ENCODE measurements at regions of chr13 and their contacts with region 1.

Region 1: DNA sequence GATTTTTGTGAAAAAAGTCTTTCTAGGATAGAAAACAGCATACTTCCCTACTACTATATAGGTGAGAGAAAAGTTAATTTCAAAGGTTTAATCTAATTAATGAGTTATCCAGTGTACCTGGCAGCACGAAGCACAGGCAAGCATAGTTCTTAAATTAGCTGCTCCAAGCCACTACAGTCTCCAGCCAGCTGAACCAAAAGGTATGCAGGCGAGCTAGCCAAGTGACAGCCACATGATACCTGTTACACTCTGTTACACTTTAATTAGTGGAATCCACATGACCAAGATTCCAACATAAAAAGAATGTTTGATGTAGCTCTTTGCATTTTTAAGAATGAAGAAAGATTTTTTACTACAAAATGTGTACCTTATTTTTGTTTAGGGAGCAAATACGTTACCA is 15.5 kb downstream of the SLC25A30 start:
- DNase-seq: no peak
- H3K4me3 ChIP-seq: no peak overlapping the region
- H3K27ac ChIP-seq: no peak overlapping the region
- H3K4me1 ChIP-seq: peaks cover 9 to 40% (median 19%) of the 10 kb centered on the region in 4 experiments
- H3K27me3 ChIP-seq: no peaks in the 10 kb centered on the region

Region 2: DNA sequence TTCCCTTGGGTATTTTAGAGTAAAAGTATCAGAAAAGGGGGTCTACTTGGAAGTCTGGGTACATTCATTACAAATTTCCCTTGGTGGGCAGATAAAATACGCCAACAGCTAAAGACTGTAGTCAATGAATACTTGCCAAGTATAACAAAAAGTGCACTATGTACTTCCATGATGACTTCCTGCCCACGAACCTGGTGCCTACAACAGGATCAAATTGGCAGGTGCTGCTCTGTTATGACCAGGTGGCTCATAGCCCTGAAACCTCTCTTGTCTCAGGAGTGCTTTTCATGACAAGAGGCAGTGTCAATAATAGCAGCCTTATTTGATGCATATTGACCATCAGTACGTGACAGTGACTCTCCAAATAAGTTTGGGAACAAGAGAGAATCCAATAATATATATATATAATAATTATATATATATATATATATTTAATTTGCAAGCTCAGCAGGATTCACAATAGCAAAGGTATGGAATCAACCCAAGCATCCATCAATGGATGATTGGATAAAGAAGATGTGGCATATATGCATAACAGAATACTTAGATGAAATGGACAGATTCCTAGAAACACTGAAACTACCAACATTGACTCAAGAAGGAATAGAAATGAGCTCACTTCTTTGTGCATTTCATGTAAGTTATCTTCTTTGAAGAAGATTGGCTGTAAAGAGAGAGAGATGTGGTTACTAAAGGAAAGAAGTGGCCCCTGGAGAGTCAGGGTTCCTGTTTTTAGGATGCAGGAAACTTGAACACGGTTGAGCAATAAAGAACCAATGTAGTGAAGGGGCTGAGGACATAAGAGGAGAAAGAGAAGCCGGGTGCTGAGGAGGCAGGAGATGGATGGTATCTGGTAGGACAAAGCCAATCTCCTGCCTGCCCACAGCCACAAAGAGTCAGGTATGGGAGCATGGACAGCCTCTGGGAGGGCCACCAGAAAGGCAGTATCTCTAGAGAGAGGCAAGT is 334.3 kb before region 1 on chr13:
- CTCF ChIA-PET with region 1: no interaction called
- POLR2A ChIA-PET with region 1: no interaction called
- DNase-seq: peak in 2 of 3 donors; percentile 32 to 37
- H3K4me3 ChIP-seq: no peak overlapping the region
- H3K27ac ChIP-seq: no peak overlapping the region
- H3K4me1 ChIP-seq: peaks cover 0 to 7% (median 4%) of the 10 kb centered on the region in 4 experiments
- H3K27me3 ChIP-seq: no peaks in the 10 kb centered on the region

Region 3: DNA sequence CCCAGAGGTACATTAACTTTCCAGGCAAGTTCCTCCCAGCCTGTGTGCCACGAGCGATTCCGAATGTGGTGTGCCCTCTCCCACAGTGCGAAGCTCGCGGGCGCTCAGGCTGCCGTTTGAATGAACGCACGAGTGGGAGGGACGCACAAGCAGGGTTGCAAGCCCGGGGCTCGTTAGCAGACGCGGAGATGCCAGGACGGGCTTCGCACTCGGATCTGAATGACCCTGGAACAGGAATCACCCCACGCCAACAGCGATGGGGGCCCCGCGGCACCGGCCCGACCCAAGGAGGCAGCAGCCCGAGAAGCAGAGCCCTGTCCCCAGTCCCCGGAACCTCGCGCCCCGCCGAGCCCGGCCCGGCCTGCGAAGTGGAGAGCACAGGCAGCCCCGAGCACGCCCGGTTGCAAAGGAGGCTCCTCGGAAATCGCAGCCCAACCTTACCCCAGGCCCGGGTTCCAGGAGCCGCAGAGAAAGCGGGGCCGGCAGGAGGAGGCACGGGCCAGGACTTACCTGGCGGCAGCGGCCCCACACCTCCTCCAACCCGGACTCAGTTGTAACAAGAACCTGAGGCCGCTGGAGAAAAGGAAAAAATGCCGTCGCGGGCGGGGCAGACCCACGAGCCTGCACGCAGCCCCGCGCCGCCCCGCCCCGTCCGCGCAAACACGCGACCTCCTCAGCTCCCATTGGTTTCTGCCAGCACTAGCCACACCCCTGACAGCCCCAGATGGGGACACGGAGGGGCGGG is 15.3 kb after region 1 on chr13 and contains the start of gene SLC25A30:
- CTCF ChIA-PET with region 1: interaction called, 30 read pairs
- POLR2A ChIA-PET with region 1: interaction called, 6 read pairs
- DNase-seq: peak; percentile 95 to 96 (median 96)
- H3K4me3 ChIP-seq: peak within 1 kb of the TSS; percentile 70 to 95 (median 89)
- H3K27ac ChIP-seq: peak within 1 kb of the TSS; percentile 86 to 94
- H3K4me1 ChIP-seq: peaks cover 9 to 39% (median 25%) of the 10 kb centered on the region in 4 experiments
- H3K27me3 ChIP-seq: no peaks in the 10 kb centered on the region

Measured in common myeloid progenitor, CD34-positive (primary cell).